Posterior cingulate gyrus (tissue), 11 donors: ENCODE measurements at regions of chr16 and their contacts with region 1.

Region 1: DNA sequence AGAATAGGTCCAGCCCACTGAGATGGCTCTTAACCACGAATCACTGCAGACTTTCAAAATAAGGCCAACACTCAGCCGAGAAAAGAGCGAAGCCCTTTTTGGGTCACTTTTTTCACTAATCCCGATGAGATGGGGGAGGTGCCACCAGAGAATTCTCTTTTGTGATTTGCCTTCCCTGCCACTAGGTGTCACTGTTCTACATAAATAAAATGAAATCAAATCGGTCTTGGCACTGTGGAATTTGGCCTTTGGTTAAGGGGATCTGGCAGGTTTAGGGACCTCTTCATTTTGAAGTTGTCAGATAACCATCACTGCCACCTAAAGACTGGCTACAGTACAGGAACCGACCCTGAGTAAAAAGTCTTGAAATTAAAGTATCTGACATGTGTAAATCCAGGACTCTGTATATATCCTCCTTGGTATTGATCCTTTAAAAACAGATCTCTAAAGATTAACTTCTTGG is 147.0 kb downstream of the HS3ST4 start:
- DNase-seq: peak in 2 of 10 donors; percentile 8

Region 2: GRCh38 chr16:26569793-26570192 is 731.0 kb after region 1 on chr16:
- intact Hi-C with region 1: loop called (anchors 5 kb)
- DNase-seq: peak in 2 of 10 donors; percentile 8 to 15

Region 3: GRCh38 chr16:26795184-26795583 is 956.4 kb after region 1 on chr16:
- intact Hi-C with region 1: loop called (anchors 10 kb)
- DNase-seq: peak in 2 of 10 donors; percentile 17 to 28

Region 4: GRCh38 chr16:27109666-27110523 is 1271.1 kb after region 1 on chr16:
- intact Hi-C with region 1: loop called (anchors 5 kb)
- DNase-seq: peak; percentile 27 to 95 (median 66)